Heart left ventricle (tissue), 16 donors: ENCODE measurements at regions of chr1 and their contacts with region 1.

Region 1: DNA sequence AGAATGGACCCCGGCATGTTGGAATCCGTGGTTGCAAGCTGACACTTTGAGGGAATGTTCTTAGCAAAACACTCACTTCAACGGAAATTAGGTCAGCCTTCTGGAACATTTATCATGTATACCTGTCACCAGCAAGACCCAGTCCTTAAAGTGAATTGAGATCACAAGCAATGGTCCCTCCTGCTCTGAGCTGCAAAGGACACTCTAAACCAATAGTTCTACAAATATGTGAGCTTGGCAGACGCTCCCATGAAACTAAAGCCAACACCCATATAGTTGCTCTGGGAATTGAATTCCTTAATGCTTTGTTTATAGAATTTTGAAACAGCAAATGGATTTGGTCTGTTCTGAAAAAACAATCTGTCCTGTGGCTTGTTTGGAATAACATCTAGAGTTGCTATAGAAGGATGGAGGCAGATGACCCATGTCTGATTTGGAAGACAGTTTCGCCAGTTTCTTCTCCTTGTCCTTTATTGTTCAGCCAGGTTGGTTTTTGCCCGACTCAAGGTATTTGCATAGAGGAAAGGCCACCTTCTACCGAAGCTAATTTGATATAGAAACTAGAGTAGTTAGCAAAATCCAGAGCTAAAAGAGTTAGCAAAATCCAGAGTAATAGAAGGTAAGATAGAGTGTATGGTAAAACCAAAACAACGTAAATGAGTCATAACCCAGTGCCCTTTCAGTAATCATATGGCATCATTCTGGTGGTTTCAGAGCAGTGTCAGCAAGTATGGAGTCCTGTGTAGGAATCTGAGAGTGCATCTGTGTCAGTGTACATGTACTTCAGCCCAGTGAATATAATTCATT is 236.2 kb downstream of the NFIA start:
- DNase-seq: peak in 1 of 5 donors; percentile 24
- ATAC-seq: peak; percentile 62 to 82 (median 80)
- H3K4me3 ChIP-seq: peak overlapping the region in 9 of 12 donors; percentile 1 to 28 (median 15)
- H3K27ac ChIP-seq: peak overlapping the region; percentile 11 to 73 (median 58)
- H3K4me1 ChIP-seq: peaks cover 3 to 47% (median 31%) of the 10 kb centered on the region in 12 donors
- H3K27me3 ChIP-seq: no peaks in the 10 kb centered on the region
- CTCF ChIP-seq: no peak
- POLR2A ChIP-seq: no peak

Region 2: GRCh38 chr1:61244114-61244513 is 74.4 kb before region 1 on chr1:
- intact Hi-C with region 1: loop called in 1 of 10 experiments (anchors 5 kb)
- DNase-seq: no peak
- ATAC-seq: peak in 3 of 4 donors; percentile 27 to 53 (median 51)
- H3K4me3 ChIP-seq: no peak overlapping the region
- H3K27ac ChIP-seq: peak overlapping the region in 9 of 12 donors; percentile 5 to 68 (median 34)
- H3K4me1 ChIP-seq: peaks cover 0 to 69% (median 50%) of the 10 kb centered on the region in 12 donors
- H3K27me3 ChIP-seq: no peaks in the 10 kb centered on the region
- CTCF ChIP-seq: no peak
- POLR2A ChIP-seq: no peak

Region 3: DNA sequence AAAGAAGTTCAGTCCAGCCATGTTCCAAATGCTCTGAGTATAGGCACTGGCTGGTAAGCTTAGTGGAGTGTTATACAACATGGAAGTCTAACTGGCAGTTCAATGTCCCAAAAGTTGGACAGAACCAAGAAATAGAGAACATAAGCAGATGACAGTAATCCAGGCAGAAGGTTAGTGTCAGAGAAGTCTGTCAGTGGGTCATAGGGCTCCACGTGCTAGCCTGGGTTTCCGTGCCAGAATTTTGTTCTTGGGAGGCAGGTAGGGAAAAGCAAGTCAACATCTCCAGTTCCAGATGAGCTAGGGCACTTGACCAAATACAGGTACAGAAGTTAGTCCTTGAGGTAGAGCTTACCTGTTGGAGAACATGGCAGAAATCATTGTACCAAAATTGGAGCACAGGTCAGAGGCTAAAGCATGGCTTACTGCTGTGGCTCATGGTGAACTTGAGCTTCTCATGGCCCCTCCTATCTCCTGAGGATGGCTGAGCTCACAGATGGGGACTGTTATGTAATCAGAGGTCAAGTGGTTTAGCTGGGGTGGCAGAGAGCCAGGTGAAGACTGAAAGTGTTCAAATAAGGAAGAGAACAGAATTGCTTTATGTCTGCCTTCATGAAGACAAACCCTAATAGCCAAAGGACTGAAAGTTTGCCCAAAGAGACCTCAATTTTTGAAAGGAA is 65.3 kb before region 1 on chr1:
- intact Hi-C with region 1: loop called in 1 of 10 experiments (anchors 10 kb)
- DNase-seq: peak in 4 of 5 donors; percentile 76 to 88 (median 80)
- ATAC-seq: peak; percentile 53 to 84 (median 76)
- H3K4me3 ChIP-seq: no peak overlapping the region
- H3K27ac ChIP-seq: peak overlapping the region in 11 of 12 donors; percentile 35 to 80 (median 74)
- H3K4me1 ChIP-seq: peaks cover 6 to 78% (median 42%) of the 10 kb centered on the region in 12 donors
- H3K27me3 ChIP-seq: no peaks in the 10 kb centered on the region
- CTCF ChIP-seq: no peak
- POLR2A ChIP-seq: no peak